ENCODE measurements at regions of chr5 and their contacts with region 1.

Region 1: DNA sequence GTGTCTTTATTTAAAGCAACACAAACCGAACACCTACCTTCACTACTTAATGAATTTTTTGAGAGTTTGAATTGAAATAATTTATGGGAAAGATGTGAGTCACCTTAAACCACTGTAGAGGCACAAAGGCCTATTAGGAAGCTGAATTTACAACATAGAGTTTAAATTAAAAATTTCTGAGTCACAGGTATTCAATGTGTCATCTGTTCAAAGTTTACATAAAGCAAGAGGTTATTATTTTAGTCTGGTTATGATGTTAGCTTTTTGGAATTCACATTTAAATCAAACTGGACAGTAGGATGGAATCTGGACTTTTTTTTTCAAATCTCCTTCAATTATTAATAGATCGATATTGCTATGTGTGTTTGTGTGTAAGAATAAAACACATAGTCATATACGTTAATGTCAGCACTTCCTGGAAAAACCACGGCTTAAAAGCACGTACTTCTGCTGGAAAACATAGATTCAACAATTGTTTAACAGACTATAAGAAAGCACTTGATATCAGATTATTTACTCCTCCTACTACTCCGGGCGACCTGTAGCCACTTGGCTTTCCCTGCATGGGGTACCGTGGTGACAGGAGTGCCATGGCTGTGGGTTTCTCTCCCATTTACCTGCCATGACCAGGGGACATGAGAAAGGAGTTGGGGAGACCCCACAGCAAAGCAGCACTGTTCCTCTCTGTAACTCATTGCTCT is 638.6 kb downstream of the SEMA5A start:
- DNase-seq: no peak
- H3K4me3 Mint-ChIP-seq: no peak overlapping the region
- H3K27ac Mint-ChIP-seq: no peak overlapping the region
- H3K4me1 Mint-ChIP-seq: no peaks in the 10 kb centered on the region
- H3K27me3 Mint-ChIP-seq: no peaks in the 10 kb centered on the region
- CTCF ChIP-seq: no peak

Region 2: DNA sequence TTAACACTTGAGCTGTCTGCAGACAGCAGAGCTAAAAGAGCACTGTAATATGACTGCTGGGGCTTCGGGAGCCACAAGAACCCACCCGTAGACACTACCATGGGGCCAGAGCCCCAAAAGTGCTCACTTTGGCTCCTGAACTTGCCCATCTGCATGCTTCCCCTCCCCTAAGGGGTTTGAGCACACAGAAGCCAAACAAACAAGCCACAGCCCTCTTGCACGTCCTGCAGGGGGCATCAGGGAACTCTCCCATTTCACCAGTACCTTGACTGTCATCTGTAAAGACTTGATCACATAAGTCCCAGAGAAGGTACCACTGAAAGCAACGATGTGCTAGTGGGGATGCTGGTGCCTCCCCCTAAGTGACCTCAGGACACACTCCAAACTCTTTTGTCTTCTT is 43.3 kb before region 1 on chr5:
- CTCF ChIA-PET with region 1: no interaction called
- intact Hi-C with region 1: loop called (anchors 2 kb)
- DNase-seq: peak; percentile 18
- H3K4me3 Mint-ChIP-seq: no peak overlapping the region
- H3K27ac Mint-ChIP-seq: no peak overlapping the region
- H3K4me1 Mint-ChIP-seq: no peaks in the 10 kb centered on the region
- H3K27me3 Mint-ChIP-seq: no peaks in the 10 kb centered on the region
- CTCF ChIP-seq: no peak

Measured in Calu3 (cell line).